CD4-positive, alpha-beta T cell (primary cell): ENCODE measurements at regions of chr6 and their contacts with region 1.

Region 1: GRCh38 chr6:139250296-139251044 is 41.3 kb downstream of the TXLNB start:
- DNase-seq: peak; percentile 32 to 81 (median 46)
- ATAC-seq: peak; percentile 95
- H3K4me3 ChIP-seq: no peak overlapping the region
- H3K4me3 Mint-ChIP-seq: peak overlapping the region; percentile 78
- H3K27ac ChIP-seq: peak overlapping the region in 1 of 2 donors; percentile 45
- H3K27ac Mint-ChIP-seq: peak overlapping the region; percentile 62
- H3K4me1 ChIP-seq: peaks cover 26% of the 10 kb centered on the region
- H3K4me1 Mint-ChIP-seq: peaks cover 42% of the 10 kb centered on the region
- H3K27me3 ChIP-seq: no peaks in the 10 kb centered on the region
- H3K27me3 Mint-ChIP-seq: no peaks in the 10 kb centered on the region
- CTCF ChIP-seq: peak; percentile 57

Region 2: DNA sequence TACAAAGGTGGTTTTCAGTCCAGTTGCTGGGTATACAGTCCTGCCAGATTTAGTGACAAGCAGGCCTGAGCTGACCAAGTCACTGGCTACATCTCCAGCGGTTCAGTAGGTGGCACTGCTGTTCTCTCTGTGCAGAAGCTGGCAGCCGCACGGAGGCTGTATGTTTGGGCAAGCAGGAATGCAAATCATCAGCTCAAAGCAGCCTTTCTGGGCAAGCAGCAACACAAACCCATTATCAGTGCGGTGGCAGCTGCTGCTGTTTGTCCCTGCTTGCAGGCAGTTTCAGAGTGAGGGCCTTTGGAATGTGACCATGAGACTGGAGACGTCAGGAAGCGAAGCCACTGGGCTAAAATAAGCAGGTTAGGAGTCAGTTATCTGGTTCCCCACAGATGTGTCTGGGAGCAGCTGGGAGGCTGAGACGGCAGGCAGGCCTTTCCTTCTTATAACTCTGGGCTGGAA is 31.2 kb before region 1 on chr6:
- CTCF ChIA-PET with region 1: interaction called, 11 read pairs
- POLR2A ChIA-PET with region 1: interaction called, 3 read pairs
- intact Hi-C with region 1: no loop called
- DNase-seq: peak; percentile 47 to 87 (median 68)
- ATAC-seq: peak; percentile 98
- H3K4me3 ChIP-seq: no peak overlapping the region
- H3K4me3 Mint-ChIP-seq: no peak overlapping the region
- H3K27ac ChIP-seq: no peak overlapping the region
- H3K27ac Mint-ChIP-seq: peak overlapping the region; percentile 1
- H3K4me1 ChIP-seq: peaks cover 8% of the 10 kb centered on the region
- H3K4me1 Mint-ChIP-seq: peaks cover 16% of the 10 kb centered on the region
- H3K27me3 ChIP-seq: no peaks in the 10 kb centered on the region
- H3K27me3 Mint-ChIP-seq: no peaks in the 10 kb centered on the region
- CTCF ChIP-seq: peak; percentile 85

Region 3: GRCh38 chr6:139262519-139263300 is 12.2 kb after region 1 on chr6:
- CTCF ChIA-PET with region 1: interaction called, 15 read pairs
- POLR2A ChIA-PET with region 1: interaction called, 3 read pairs
- intact Hi-C with region 1: no loop called
- DNase-seq: peak in 5 of 14 experiments; percentile 8 to 69 (median 61)
- ATAC-seq: peak; percentile 90
- H3K4me3 ChIP-seq: peak overlapping the region; percentile 35
- H3K4me3 Mint-ChIP-seq: peak overlapping the region; percentile 70
- H3K27ac ChIP-seq: peak overlapping the region; percentile 25 to 26
- H3K27ac Mint-ChIP-seq: peak overlapping the region; percentile 79
- H3K4me1 ChIP-seq: peaks cover 24% of the 10 kb centered on the region
- H3K4me1 Mint-ChIP-seq: peaks cover 27% of the 10 kb centered on the region
- H3K27me3 ChIP-seq: no peaks in the 10 kb centered on the region
- H3K27me3 Mint-ChIP-seq: no peaks in the 10 kb centered on the region
- CTCF ChIP-seq: no peak